ENCODE measurements at regions of chr16 and their contacts with region 1.

Region 1: DNA sequence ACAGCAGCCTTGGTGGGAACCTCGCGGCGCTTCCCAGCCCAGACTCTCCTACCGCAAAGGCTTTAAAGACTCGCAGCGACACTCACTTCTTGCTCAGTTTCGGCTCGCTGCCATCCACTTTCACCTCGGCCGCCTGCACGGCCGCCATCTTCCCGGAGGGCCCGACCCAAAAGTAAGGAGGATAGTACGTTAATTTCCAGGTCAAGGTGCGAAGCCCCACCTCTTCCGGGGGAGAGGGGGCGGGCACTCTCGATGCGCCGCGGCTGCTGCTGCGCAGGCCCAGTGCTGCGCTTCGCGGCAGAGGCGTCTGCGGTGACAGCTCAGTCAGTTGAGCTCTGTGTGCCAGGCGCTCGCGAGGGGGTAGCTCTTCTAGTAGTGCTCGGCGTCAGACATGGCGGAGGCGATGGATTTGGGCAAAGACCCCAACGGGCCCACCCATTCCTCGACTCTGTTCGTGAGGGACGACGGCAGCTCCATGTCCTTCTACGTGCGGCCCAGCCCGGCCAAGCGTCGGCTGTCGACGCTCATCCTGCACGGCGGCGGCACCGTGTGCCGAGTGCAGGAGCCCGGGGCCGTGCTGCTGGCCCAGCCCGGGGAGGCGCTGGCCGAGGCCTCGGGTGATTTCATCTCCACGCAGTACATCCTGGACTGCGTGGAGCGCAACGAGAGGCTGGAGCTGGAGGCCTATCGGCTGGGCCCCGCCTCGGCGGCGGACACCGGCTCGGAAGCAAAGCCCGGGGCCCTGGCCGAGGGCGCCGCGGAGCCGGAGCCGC is at the starts of genes KARS1 and TERF2IP:
- DNase-seq: peak; percentile 94 to 96 (median 95)
- H3K4me3 ChIP-seq: peak within 1 kb of the TSS; percentile 79 to 99
- H3K4me3 Mint-ChIP-seq: peak within 1 kb of the TSS; percentile 94 to 100 (median 99)
- H3K27ac ChIP-seq: peak within 1 kb of the TSS; percentile 98
- H3K27ac Mint-ChIP-seq: peak within 1 kb of the TSS; percentile 95 to 99 (median 99)
- H3K4me1 ChIP-seq: peaks cover 71% of the 10 kb centered on the region
- H3K4me1 Mint-ChIP-seq: peaks cover 44 to 73% (median 59%) of the 10 kb centered on the region in 4 donors
- H3K27me3 ChIP-seq: no peaks in the 10 kb centered on the region
- H3K27me3 Mint-ChIP-seq: no peaks in the 10 kb centered on the region
- total RNA-seq, gene KARS1: 120 to 124 TPM
- total RNA-seq, gene TERF2IP: 98.4 to 108 TPM

Region 2: GRCh38 chr16:74296432-74297144 is 1351.1 kb before region 1 on chr16 and contains the start of gene PSMD7:
- CTCF ChIA-PET with region 1: no interaction called
- POLR2A ChIA-PET with region 1: no interaction called
- intact Hi-C with region 1: loop called (anchors 2 kb)
- DNase-seq: peak; percentile 89 to 91 (median 91)
- H3K4me3 ChIP-seq: peak within 1 kb of the TSS; percentile 43 to 88
- H3K4me3 Mint-ChIP-seq: peak within 1 kb of the TSS; percentile 86 to 98 (median 92)
- H3K27ac ChIP-seq: peak within 1 kb of the TSS; percentile 91
- H3K27ac Mint-ChIP-seq: peak within 1 kb of the TSS; percentile 89 to 98 (median 96)
- H3K4me1 ChIP-seq: peaks cover 34% of the 10 kb centered on the region
- H3K4me1 Mint-ChIP-seq: peaks cover 10 to 50% (median 31%) of the 10 kb centered on the region in 4 donors
- H3K27me3 ChIP-seq: no peaks in the 10 kb centered on the region
- H3K27me3 Mint-ChIP-seq: no peaks in the 10 kb centered on the region
- total RNA-seq, gene PSMD7: 67.0 to 68.6 TPM

Region 3: DNA sequence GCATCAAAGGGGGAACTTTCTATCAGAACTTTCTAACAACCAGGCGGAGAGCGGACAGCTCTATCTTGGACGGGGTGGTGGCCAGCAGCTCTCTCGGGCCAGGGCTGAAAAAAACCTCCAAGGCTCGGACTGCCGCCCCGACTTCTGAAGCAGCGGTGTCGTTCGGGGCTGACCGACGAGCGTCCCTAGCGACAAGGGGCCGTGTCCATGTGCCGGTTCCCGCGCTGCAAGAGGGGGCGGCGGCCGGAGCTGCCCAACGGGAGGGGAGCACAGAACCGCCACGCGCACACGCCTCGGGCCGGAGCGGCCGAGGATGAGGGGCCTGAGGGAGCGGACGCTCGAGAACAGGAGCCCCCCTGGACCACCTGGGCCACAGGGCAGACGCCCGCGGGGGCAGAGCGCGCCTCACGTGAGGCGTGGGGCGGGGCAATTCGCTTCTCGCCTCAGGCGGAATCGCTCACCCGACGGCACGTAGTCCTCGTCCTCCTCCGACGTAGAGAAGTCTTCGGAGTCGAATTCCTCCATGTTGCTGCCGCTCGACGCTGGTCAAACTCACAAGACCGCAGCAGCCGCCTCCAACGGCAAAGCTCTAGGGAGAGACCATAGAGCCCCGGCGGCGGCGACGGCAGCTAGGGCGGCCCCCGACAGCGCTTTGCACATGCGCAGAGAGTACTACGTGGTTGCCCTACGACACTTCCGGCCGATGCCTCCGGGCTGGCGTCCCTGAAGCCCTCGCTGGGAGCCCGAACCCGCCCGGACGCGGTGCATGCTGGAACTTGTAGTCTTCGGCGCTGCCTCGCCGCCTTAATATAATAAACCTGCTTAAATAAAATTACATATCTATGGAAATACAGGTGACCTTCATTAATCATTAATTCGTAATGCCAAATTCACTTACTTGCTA is 214.6 kb before region 1 on chr16 and contains the start of gene CFDP1:
- CTCF ChIA-PET with region 1: interaction called, 12 read pairs
- POLR2A ChIA-PET with region 1: interaction called, 61 read pairs
- intact Hi-C with region 1: loop called (anchors 1 kb)
- DNase-seq: peak; percentile 96 to 98 (median 97)
- H3K4me3 ChIP-seq: peak within 1 kb of the TSS; percentile 61 to 90
- H3K4me3 Mint-ChIP-seq: peak within 1 kb of the TSS; percentile 89 to 95 (median 94)
- H3K27ac ChIP-seq: peak within 1 kb of the TSS; percentile 96
- H3K27ac Mint-ChIP-seq: peak within 1 kb of the TSS; percentile 92 to 98 (median 97)
- H3K4me1 ChIP-seq: peaks cover 30% of the 10 kb centered on the region
- H3K4me1 Mint-ChIP-seq: peaks cover 16 to 56% (median 43%) of the 10 kb centered on the region in 4 donors
- H3K27me3 ChIP-seq: no peaks in the 10 kb centered on the region
- H3K27me3 Mint-ChIP-seq: no peaks in the 10 kb centered on the region
- total RNA-seq, gene CFDP1: 41.8 to 42.4 TPM

Region 4: DNA sequence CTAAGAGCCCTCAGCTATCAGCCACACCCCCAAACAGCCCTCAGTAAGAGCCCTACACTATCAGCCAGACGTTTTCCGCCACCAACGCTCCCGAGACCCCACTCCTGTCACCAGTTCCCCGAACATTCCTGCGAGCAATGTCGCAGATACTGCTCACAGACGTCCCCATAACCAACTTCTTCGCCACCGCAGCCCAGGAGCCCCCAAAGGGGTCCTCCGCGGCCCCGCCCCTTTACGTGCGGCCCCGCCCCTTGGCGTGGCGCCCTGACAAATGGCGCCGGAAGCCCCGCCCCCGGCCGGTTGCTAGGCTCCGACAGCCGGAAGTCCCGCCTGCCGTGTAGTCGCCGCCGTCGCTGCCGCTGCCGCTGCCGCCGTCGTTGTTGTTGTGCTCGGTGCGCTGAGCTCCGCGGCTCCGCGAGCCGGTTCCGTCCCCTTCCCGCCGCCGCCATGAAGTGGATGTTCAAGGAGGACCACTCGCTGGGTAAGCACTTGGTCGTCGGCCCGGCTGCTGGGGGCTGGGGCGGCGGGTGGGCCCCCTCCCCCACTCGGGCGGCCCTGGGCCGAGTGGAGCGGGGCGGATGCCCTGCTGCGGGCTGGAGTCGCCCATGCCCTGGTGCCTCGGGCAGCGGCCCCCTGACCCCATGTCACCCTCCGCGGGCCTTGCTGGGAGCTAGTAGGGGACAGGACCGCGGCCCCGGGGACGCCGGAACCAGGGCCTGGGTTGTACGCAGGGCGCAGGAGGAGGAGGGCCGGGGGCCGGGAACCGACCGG is 81.5 kb before region 1 on chr16 and contains the start of gene GABARAPL2:
- CTCF ChIA-PET with region 1: interaction called, 8 read pairs
- POLR2A ChIA-PET with region 1: interaction called, 66 read pairs
- intact Hi-C with region 1: loop called (anchors 1 kb)
- DNase-seq: peak; percentile 87 to 95 (median 91)
- H3K4me3 ChIP-seq: peak within 1 kb of the TSS; percentile 68 to 100
- H3K4me3 Mint-ChIP-seq: peak within 1 kb of the TSS; percentile 89 to 100 (median 97)
- H3K27ac ChIP-seq: peak within 1 kb of the TSS; percentile 82
- H3K27ac Mint-ChIP-seq: peak within 1 kb of the TSS; percentile 84 to 100 (median 97)
- H3K4me1 ChIP-seq: peaks cover 48% of the 10 kb centered on the region
- H3K4me1 Mint-ChIP-seq: peaks cover 26 to 57% (median 38%) of the 10 kb centered on the region in 4 donors
- H3K27me3 ChIP-seq: no peaks in the 10 kb centered on the region
- H3K27me3 Mint-ChIP-seq: peaks cover 0 to 7% of the 10 kb centered on the region in 2 donors
- total RNA-seq, gene GABARAPL2: 91.9 to 100 TPM

Region 5: GRCh38 chr16:75632857-75633256 is 14.8 kb before region 1 on chr16:
- CTCF ChIA-PET with region 1: interaction called, 8 read pairs
- POLR2A ChIA-PET with region 1: interaction called, 70 read pairs
- intact Hi-C with region 1: no loop called
- DNase-seq: no peak
- H3K4me3 ChIP-seq: no peak overlapping the region
- H3K4me3 Mint-ChIP-seq: no peak overlapping the region
- H3K27ac ChIP-seq: no peak overlapping the region
- H3K27ac Mint-ChIP-seq: peak overlapping the region in 2 of 7 donors; percentile 30 to 53
- H3K4me1 ChIP-seq: peaks cover 15% of the 10 kb centered on the region
- H3K4me1 Mint-ChIP-seq: peaks cover 16 to 18% (median 17%) of the 10 kb centered on the region in 4 donors
- H3K27me3 ChIP-seq: no peaks in the 10 kb centered on the region
- H3K27me3 Mint-ChIP-seq: no peaks in the 10 kb centered on the region

Region 6: DNA sequence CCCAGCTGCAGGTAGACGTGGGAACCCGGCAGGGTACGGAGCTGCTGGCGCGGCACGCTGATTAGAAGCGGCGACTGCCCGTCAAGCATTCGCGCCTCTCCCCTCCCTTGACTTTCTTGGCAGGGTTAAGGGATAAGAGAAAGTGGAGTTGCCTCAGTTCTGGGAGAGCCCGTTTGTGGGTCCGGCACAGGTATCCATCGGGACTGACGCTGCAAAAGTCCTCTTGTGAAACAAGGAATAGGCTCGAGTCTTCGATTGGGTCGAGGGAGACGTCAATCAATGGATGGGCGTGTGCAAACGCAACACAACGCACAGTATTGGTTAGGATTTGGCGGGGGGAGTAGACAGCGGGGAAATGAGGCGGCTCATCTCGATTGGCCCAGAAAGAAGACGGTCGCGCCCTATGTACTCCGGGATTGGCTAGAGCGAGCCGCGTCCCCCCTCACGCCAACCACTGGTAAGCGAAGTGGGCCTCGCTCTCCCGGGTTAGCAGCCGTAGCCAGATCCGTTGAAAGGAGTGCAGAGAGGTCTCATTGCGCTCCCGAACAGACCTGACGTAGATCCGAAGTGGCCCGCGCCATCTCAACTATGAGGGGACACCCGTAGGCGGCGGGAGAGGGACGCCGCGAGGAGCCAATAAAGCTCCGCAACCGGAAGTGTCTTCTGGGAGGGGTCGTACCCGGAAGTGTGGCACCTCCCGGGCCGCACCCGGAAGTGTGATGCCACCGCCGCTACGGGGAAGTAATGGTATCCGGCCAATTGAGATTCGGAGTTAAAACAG is 1543.0 kb after region 1 on chr16 and contains the start of gene MON1B:
- CTCF ChIA-PET with region 1: interaction called, 3 read pairs
- POLR2A ChIA-PET with region 1: interaction called, 11 read pairs
- intact Hi-C with region 1: loop called (anchors 1 kb)
- DNase-seq: peak; percentile 97 to 98 (median 98)
- H3K4me3 ChIP-seq: peak within 1 kb of the TSS; percentile 97 to 99
- H3K4me3 Mint-ChIP-seq: peak within 1 kb of the TSS; percentile 94 to 100 (median 98)
- H3K27ac ChIP-seq: peak within 1 kb of the TSS; percentile 93
- H3K27ac Mint-ChIP-seq: peak within 1 kb of the TSS; percentile 98 to 100 (median 99)
- H3K4me1 ChIP-seq: peaks cover 27% of the 10 kb centered on the region
- H3K4me1 Mint-ChIP-seq: peaks cover 31 to 50% (median 38%) of the 10 kb centered on the region in 4 donors
- H3K27me3 ChIP-seq: no peaks in the 10 kb centered on the region
- H3K27me3 Mint-ChIP-seq: no peaks in the 10 kb centered on the region
- total RNA-seq, gene MON1B: 82.4 to 85.4 TPM

Measured in CD4-positive, alpha-beta memory T cell (primary cell).